GM12878 (cell line): ENCODE measurements at regions of chr15 and their contacts with region 1.

Region 1: DNA sequence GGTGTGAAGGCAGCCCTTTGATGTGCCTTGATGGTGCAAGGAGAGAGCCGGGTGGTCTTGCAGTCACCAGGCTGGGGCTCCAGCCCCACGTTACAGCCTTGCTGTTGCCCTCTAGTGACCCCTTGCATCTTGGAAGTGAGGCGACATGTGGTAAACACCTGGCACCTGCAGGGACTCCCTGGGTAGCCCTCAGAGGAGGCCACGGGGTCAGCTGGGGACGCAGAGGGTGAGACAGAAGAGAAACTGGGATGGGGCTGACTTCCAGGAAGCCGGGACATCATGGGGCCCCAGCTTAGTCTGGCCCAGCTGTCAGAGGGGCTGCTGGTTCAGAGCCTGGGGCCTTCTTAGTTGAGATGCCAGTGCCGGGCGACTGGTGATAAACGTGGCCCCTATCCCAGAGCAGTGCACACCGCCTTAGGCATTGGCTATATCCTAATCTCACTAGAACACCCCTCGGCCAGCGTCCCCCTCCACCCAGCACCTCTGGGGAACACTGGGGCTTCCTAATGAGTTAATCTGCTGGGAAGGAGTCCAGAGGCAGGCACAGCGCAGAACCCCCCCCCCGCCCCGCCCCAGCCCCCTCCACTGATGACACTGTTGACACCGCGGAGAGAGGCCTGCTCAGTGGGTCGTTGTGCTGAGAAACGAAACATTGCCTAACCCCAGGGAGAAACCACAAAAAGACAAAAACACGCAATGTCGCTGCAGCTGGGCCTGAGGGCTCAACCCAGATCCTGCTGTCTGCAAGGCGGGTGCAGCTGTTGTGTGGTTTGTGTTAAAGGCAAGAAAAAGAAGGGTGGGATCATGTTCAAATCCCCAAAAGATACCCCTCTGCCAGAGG is 60.5 kb upstream of the KLF13 start:
- DNase-seq: peak; percentile 86
- ATAC-seq: peak; percentile 65
- H3K4me3 ChIP-seq: peak overlapping the region; percentile 41; the same call in 1 of the 2 replicates
- H3K27ac ChIP-seq: peak overlapping the region; percentile 94
- H3K4me1 ChIP-seq: peaks cover 63% of the 10 kb centered on the region
- H3K27me3 ChIP-seq: no peaks in the 10 kb centered on the region
- CTCF ChIP-seq: 0 out of 6 replicates have a peak, but pooled peaks of 1 of the 3 experiments have one; percentile 6
- EP300 ChIP-seq: peak; percentile 89 to 93; a peak in 3 of 4 replicates
- POLR2A ChIP-seq: no peak; the same call in 1 of the 2 replicates
- RAD21 ChIP-seq: peak; percentile 32

Region 2: GRCh38 chr15:31163746-31164563 is 102.1 kb before region 1 on chr15:
- CTCF ChIA-PET with region 1: no interaction called
- POLR2A ChIA-PET with region 1: no interaction called
- RAD21 ChIA-PET with region 1: no interaction called
- SMC1A ChIA-PET with region 1: no interaction called
- in situ Hi-C with region 1: no loop called
- intact Hi-C with region 1: no loop called
- DNase-seq: no peak
- ATAC-seq: no peak
- H3K4me3 ChIP-seq: no peak overlapping the region
- H3K27ac ChIP-seq: no peak overlapping the region
- H3K4me1 ChIP-seq: peaks cover 3% of the 10 kb centered on the region; the same call in 1 of the 2 replicates
- H3K27me3 ChIP-seq: no peaks in the 10 kb centered on the region
- CTCF ChIP-seq: no peak
- EP300 ChIP-seq: no peak
- POLR2A ChIP-seq: no peak
- RAD21 ChIP-seq: no peak

Region 3: DNA sequence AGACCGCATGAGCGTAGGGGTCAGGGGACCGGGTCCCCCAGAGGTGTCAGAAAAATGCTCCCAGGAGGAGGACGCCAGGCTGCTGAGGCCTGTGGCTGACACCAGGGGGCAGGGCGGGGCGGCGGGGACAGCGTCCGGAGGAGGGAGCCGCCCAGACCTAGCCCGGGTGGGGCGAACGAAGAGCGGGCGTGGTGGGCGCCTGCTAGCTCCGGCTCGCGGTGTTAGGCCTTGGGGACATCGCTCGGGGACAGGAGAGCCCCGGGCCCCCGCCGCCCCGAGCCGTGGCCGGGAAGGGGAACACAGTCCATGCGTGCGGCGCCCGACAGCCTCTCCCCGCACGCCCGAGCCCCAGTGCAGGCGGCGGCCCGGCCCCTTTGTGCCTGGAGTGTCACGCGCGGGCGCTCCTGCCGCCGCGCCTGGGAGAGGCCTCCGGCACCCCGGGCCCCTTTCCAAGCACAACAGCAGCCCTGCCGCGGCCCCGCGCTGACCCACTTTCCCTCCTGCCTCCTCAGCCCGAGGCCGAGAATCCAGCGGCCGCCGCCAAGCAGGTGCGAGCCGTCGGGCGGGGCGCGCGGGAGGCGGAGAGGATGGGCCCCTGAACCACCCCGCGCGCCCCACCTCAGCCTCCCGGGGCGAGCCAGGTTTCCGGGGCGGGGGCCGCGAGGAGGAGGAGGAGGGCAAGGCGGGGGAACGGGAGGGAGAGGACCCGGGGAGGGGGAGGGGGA is 50.4 kb before region 1 on chr15:
- CTCF ChIA-PET with region 1: interaction called, 15 read pairs
- POLR2A ChIA-PET with region 1: interaction called, 11 read pairs
- RAD21 ChIA-PET with region 1: interaction called, 27 read pairs
- SMC1A ChIA-PET with region 1: interaction called, 13 read pairs
- in situ Hi-C with region 1: no loop called
- intact Hi-C with region 1: no loop called
- DNase-seq: no peak
- ATAC-seq: peak; percentile 91
- H3K4me3 ChIP-seq: peak overlapping the region; percentile 79
- H3K27ac ChIP-seq: peak overlapping the region; percentile 87
- H3K4me1 ChIP-seq: peaks cover 10% of the 10 kb centered on the region
- H3K27me3 ChIP-seq: no peaks in the 10 kb centered on the region
- CTCF ChIP-seq: peak; percentile 80 to 89 (median 89)
- EP300 ChIP-seq: no peak
- POLR2A ChIP-seq: peak; percentile 71
- RAD21 ChIP-seq: peak; percentile 88

Region 4: DNA sequence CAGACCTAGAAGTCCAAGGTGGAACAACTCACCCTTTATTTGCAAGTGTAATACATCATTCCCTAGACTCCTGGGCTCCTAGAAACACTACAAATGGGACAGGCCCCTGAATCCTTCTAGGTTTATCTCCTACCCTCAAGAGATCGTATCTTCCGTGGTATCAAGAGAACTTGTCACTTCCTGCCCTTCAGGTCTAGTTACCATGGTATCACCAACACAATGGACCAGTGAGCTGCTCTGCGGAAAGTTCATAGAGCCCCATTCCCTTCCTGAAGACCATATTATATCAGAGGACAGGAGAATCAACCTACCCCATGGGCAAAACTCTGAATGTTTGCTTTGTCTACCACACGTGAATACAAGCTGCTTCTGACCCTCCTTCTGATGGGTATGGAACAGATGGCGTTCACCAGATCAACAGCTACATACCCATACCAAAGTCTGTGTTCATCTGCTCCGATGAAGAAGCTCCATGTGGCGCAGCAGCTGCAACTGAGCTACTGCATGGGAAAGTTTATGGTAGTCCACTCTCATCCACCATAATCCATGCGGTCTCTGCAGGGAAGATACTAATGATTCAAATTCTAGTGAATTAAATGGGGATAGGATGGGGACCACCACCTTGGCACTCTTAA is 24.1 kb before region 1 on chr15:
- CTCF ChIA-PET with region 1: interaction called, 43 read pairs
- POLR2A ChIA-PET with region 1: interaction called, 75 read pairs
- RAD21 ChIA-PET with region 1: interaction called, 104 read pairs
- SMC1A ChIA-PET with region 1: interaction called, 110 read pairs
- in situ Hi-C with region 1: no loop called
- intact Hi-C with region 1: no loop called
- DNase-seq: no peak
- ATAC-seq: no peak
- H3K4me3 ChIP-seq: no peak overlapping the region
- H3K27ac ChIP-seq: no peak overlapping the region
- H3K4me1 ChIP-seq: peaks cover 22% of the 10 kb centered on the region
- H3K27me3 ChIP-seq: no peaks in the 10 kb centered on the region
- CTCF ChIP-seq: no peak
- EP300 ChIP-seq: no peak
- POLR2A ChIP-seq: no peak
- RAD21 ChIP-seq: no peak

Region 5: GRCh38 chr15:31302778-31303725 is 37.0 kb after region 1 on chr15:
- CTCF ChIA-PET with region 1: interaction called, 9 read pairs
- POLR2A ChIA-PET with region 1: interaction called, 7 read pairs
- RAD21 ChIA-PET with region 1: interaction called, 7 read pairs
- SMC1A ChIA-PET with region 1: interaction called, 8 read pairs
- in situ Hi-C with region 1: no loop called
- intact Hi-C with region 1: loop called (anchors 5 kb)
- DNase-seq: no peak
- ATAC-seq: peak; percentile 76
- H3K4me3 ChIP-seq: no peak overlapping the region
- H3K27ac ChIP-seq: no peak overlapping the region
- H3K4me1 ChIP-seq: peaks cover 19% of the 10 kb centered on the region
- H3K27me3 ChIP-seq: no peaks in the 10 kb centered on the region
- CTCF ChIP-seq: peak; percentile 19 to 34 (median 31); a peak in 5 of 6 replicates
- EP300 ChIP-seq: no peak
- POLR2A ChIP-seq: no peak
- RAD21 ChIP-seq: peak; percentile 40; the same call in 1 of the 2 replicates

Region 6: DNA sequence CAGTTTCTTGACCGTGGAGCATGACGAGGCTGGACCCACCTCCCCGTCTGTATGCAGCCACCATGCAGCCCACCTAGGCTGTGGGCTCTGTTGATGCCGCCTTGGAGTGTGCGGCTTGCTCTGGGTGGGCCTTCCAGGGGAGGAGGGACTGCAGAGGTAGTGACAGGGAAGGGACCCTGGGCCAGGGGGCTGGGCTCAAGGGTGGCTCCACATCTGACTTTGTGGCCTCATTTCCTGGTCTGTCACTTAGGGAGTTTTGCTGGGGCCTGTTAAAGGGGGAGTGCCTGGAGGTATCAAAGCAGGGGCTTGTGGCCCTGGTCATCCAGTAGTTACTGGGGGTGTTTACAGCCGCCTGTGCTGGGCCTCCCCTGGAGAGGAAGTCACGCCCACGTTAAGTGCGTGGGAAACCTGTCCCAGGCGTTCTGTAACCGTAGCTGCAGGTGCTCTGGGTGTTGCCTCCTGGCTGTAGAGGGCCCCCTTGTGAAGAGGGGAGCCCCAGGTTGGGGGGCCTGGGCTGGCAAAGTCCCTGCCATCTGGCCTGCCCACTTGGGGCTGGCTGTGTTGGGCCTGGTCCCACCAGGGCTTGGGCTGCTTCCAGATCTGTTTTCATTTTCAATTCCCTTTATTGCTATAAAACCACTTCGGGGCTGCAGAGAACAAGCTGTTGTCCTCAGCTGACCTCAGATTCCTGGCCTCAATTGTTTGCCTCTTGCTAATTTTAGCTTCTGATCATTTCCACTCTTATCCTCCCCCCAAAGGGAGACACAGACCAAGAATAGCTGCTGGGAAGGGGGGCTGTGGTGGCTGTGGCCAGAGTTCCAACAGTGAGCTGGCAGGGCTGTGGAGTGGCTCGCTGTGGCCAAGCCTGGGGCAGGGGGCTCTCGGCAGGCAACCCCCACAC is 87.1 kb after region 1 on chr15:
- CTCF ChIA-PET with region 1: interaction called, 3 read pairs
- POLR2A ChIA-PET with region 1: interaction called, 7 read pairs
- RAD21 ChIA-PET with region 1: interaction called, 24 read pairs
- SMC1A ChIA-PET with region 1: interaction called, 21 read pairs
- in situ Hi-C with region 1: no loop called
- intact Hi-C with region 1: no loop called
- DNase-seq: peak; percentile 83
- ATAC-seq: peak; percentile 87
- H3K4me3 ChIP-seq: peak overlapping the region; percentile 52; the same call in 1 of the 2 replicates
- H3K27ac ChIP-seq: peak overlapping the region; percentile 93
- H3K4me1 ChIP-seq: peaks cover 89% of the 10 kb centered on the region
- H3K27me3 ChIP-seq: no peaks in the 10 kb centered on the region
- CTCF ChIP-seq: peak in 2 of 3 experiments; percentile 7 to 22; a peak in 2 of 6 replicates
- EP300 ChIP-seq: peak; percentile 57 to 70; a peak in 3 of 4 replicates
- POLR2A ChIP-seq: peak; percentile 48; the same call in 1 of the 2 replicates
- RAD21 ChIP-seq: no peak

Region 7: GRCh38 chr15:32152574-32152973 is 886.5 kb after region 1 on chr15:
- CTCF ChIA-PET with region 1: no interaction called
- POLR2A ChIA-PET with region 1: no interaction called
- RAD21 ChIA-PET with region 1: no interaction called
- SMC1A ChIA-PET with region 1: no interaction called
- in situ Hi-C with region 1: no loop called
- intact Hi-C with region 1: no loop called
- DNase-seq: no peak
- ATAC-seq: no peak
- H3K4me3 ChIP-seq: no peak overlapping the region
- H3K27ac ChIP-seq: no peak overlapping the region
- H3K4me1 ChIP-seq: no peaks in the 10 kb centered on the region
- H3K27me3 ChIP-seq: no peaks in the 10 kb centered on the region
- CTCF ChIP-seq: no peak
- EP300 ChIP-seq: no peak
- POLR2A ChIP-seq: no peak
- RAD21 ChIP-seq: no peak